Psoas muscle (tissue), 8 donors: ENCODE measurements at regions of chr3 and their contacts with region 1.

Region 1: GRCh38 chr3:185176750-185177359 is 24.0 kb upstream of the C3orf70 start:
- DNase-seq: no peak
- ATAC-seq: no peak
- H3K4me3 ChIP-seq: no peak overlapping the region
- H3K27ac ChIP-seq: no peak overlapping the region
- H3K4me1 ChIP-seq: no peaks in the 10 kb centered on the region
- H3K27me3 ChIP-seq: peaks cover 0 to 4% (median 0%) of the 10 kb centered on the region in 3 donors
- CTCF ChIP-seq: peak; percentile 61

Region 2: DNA sequence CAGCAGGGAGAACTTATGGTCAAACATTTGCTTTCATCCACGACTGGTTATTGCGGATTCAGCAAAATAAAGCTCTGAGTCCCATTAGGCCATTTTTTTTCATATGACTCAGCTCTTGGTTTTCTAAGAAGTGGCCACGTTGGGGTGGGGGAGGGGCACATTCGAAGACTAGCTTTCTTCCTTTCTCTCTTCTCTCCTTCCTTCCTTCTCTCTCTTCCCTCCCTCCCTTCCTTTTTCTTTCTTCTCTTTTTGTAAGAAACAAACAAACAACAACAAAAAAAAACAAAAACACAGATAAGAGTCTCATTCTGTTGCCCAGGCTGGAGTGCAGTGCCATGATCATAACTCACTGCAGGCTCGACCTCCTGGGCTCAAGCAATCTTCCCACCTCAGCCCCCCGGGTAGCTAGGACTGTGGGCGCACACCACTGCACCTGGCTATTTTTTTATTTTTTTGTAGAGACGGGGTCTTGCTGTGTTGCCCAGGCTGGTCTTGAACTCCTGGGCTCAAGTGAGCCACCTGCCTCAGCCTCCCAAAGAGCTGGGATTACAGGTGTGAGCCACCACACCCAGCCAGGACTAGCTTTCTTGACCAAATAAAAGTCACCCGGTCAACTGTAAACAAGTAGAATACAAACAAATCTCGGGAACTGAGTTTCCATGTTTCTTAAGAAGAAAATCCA is 1200.7 kb before region 1 on chr3:
- intact Hi-C with region 1: no loop called
- DNase-seq: no peak
- ATAC-seq: no peak
- H3K4me3 ChIP-seq: no peak overlapping the region
- H3K27ac ChIP-seq: peak overlapping the region; percentile 21
- H3K4me1 ChIP-seq: peaks cover 40% of the 10 kb centered on the region
- H3K27me3 ChIP-seq: no peaks in the 10 kb centered on the region
- CTCF ChIP-seq: no peak

Region 3: GRCh38 chr3:184822654-184823053 is 354.2 kb before region 1 on chr3:
- intact Hi-C with region 1: no loop called
- DNase-seq: no peak
- ATAC-seq: peak; percentile 74 to 81 (median 77)
- H3K4me3 ChIP-seq: no peak overlapping the region
- H3K27ac ChIP-seq: peak overlapping the region; percentile 97
- H3K4me1 ChIP-seq: peaks cover 50% of the 10 kb centered on the region
- H3K27me3 ChIP-seq: no peaks in the 10 kb centered on the region
- CTCF ChIP-seq: no peak

Region 4: DNA sequence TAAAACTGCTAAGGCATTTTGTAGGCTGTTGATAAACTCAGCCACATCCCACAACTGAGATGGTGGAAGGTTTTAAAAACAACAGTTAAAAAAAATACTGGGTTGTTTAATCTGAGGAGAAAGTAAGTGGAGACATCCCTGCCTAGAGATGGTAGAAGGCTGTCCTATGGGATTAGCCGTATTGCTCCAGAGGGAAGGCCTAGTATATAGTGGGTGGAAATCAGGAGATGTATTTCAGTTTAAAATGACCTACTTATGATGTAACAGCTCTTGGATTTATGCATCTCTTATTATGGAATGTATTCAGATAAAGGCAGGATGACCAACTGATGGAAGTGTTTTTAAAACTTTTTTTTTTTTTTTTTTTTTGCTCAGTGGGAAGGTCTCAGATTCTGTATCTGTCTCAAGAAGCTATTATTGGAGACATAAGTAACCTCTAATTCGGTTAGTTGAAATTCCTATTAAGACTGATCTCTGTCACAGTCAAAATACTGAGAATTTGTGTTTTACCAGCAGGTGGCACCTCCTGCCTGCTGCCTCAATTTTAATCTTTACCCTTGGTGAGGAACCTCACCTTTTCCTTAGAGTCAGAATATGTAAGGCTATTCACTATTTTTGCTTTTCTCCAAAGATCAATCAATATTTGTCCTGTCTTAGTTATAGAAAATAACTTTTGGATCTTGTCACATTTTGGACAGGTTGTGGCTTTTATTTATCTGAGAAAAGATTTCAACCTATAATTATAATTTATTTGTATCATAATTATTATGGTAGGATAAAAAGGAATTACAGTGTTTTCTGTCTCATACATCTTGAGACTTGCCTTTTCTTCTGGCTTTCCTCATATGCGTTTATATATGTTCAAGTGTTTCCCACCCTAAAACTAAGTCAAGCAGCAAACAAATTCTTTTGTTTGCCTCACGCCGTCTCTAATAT is 301.9 kb before region 1 on chr3:
- intact Hi-C with region 1: loop called in 1 of 2 experiments (anchors 5 kb)
- DNase-seq: no peak
- ATAC-seq: peak in 1 of 4 donors; percentile 42
- H3K4me3 ChIP-seq: no peak overlapping the region
- H3K27ac ChIP-seq: no peak overlapping the region
- H3K4me1 ChIP-seq: peaks cover 7% of the 10 kb centered on the region
- H3K27me3 ChIP-seq: no peaks in the 10 kb centered on the region
- CTCF ChIP-seq: peak; percentile 39